WTC11 (cell line): ENCODE measurements at regions of chr1 and their contacts with region 1.

Region 1: DNA sequence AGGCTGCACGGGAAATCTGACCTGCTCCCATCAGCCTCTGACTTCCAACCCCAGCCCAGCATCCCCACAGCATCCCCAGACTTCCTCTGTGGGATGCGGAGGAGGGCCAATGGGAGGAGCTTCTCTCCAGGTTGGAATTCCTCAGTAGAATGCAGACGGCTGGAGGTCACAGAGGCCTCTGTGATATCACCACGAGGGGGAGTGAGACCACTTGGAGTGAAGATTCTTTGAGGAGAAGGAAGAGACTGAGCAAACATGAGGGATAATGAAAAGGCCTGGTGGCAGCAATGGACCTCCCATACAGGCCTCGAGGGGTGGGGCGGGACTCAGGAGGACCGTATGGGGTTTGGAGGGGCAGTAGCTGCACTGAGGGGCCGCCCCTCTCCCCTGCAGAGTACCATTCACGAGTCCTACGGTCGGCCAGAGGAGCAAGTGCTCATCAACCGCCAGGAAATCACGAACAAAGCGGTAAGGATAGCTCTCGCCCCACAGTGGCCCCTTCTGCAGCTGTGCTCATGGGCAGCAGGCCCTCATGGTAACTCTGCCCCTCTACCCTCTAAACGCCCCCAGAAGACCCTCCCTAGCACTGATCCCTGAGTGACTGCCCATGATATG is at the start of gene CATSPER4:
- DNase-seq: peak; percentile 79
- ATAC-seq: peak; percentile 97
- H3K4me3 Mint-ChIP-seq: no peak within 1 kb of the TSS
- H3K27ac Mint-ChIP-seq: peak within 1 kb of the TSS; percentile 55; the same call in 1 of the 2 replicates
- H3K4me1 Mint-ChIP-seq: peaks cover 17% of the 10 kb centered on the region
- H3K27me3 Mint-ChIP-seq: no peaks in the 10 kb centered on the region; the same call in 1 of the 2 replicates
- CTCF ChIP-seq: 0 out of 2 replicates have a peak, but pooled peaks have one; percentile 20
- total RNA-seq, gene CATSPER4: 0.35 to 0.85 TPM (median 0.55 TPM) in 3 replicates

Region 2: GRCh38 chr1:26169669-26170471 is 20.6 kb before region 1 on chr1 and contains the start of gene ZNF593:
- CTCF ChIA-PET with region 1: interaction called, 46 read pairs
- POLR2A ChIA-PET with region 1: interaction called, 4 read pairs
- DNase-seq: peak; percentile 92
- ATAC-seq: peak; percentile 76
- H3K4me3 Mint-ChIP-seq: peak within 1 kb of the TSS; percentile 85
- H3K27ac Mint-ChIP-seq: peak within 1 kb of the TSS; percentile 65; the same call in 1 of the 2 replicates
- H3K4me1 Mint-ChIP-seq: peaks cover 31% of the 10 kb centered on the region
- H3K27me3 Mint-ChIP-seq: peaks cover 14% of the 10 kb centered on the region
- CTCF ChIP-seq: peak; percentile 81
- total RNA-seq, gene ZNF593: 39.6 to 49.1 TPM (median 43.3 TPM) in 3 replicates

Region 3: DNA sequence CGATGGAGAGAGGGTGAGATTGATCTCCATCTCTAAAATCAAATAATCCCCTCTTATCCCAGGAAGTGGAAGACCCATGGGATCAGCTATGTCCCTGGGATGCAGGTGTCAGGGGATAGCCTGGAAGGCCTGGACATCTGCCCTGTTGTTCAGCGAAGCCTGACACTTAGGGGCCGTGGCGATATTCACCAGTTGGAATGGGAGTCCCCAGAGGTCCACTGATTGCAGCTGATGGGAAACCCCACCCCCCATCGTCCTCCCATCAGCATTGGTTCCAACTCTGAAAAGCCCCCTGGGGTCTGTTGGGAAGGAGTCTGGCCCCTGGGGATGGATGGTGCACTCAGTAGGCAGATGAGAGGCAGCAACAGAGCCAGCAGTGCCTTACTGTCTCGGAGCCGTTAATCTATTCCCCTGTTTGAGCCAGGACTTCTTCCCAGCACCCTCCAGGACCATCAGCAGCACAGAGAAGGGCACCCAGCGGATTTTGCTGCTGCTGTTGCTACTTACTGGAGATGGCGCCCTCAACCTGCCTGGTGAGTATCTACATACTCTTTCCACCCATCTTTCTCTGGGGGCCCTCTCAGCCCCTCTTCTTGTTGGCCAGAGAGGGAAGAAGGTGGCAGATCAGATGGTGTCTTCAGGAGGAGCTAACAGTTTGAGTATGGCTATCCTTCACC is 13.3 kb after region 1 on chr1:
- CTCF ChIA-PET with region 1: interaction called, 17 read pairs
- POLR2A ChIA-PET with region 1: interaction called, 4 read pairs
- DNase-seq: no peak
- ATAC-seq: peak; percentile 21
- H3K4me3 Mint-ChIP-seq: no peak overlapping the region
- H3K27ac Mint-ChIP-seq: no peak overlapping the region
- H3K4me1 Mint-ChIP-seq: peaks cover 18% of the 10 kb centered on the region
- H3K27me3 Mint-ChIP-seq: no peaks in the 10 kb centered on the region; the same call in none of the 2 replicates
- CTCF ChIP-seq: no peak

Region 4: GRCh38 chr1:26233903-26234643 is 43.6 kb after region 1 on chr1 and contains the start of gene CEP85:
- CTCF ChIA-PET with region 1: interaction called, 165 read pairs
- POLR2A ChIA-PET with region 1: interaction called, 9 read pairs
- DNase-seq: peak; percentile 99
- ATAC-seq: peak; percentile 96
- H3K4me3 Mint-ChIP-seq: peak within 1 kb of the TSS; percentile 99
- H3K27ac Mint-ChIP-seq: peak within 1 kb of the TSS; percentile 87
- H3K4me1 Mint-ChIP-seq: peaks cover 25% of the 10 kb centered on the region
- H3K27me3 Mint-ChIP-seq: peaks cover 4% of the 10 kb centered on the region
- CTCF ChIP-seq: peak; percentile 49; the same call in 1 of the 2 replicates
- total RNA-seq, gene CEP85: 32.0 to 40.8 TPM (median 35.3 TPM) in 3 replicates

Region 5: DNA sequence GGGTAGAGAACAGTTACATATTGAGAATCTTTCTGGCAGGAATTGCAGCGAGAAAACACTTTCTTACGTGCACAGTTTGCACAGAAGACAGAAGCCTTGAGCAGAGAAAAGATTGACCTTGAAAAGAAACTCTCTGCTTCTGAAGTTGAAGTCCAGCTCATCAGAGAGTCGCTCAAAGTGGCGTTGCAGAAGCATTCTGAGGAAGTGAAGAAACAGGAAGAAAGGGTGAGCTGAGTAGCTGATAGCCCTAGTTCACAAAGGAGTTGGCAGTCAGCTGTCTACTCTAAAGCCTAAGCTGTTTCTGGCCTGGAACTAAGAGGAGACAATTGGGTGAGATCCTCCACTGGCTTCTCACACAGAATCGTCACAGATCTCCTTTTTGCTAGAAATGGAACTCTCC is 69.1 kb after region 1 on chr1:
- CTCF ChIA-PET with region 1: no interaction called
- POLR2A ChIA-PET with region 1: no interaction called
- DNase-seq: no peak
- ATAC-seq: no peak
- H3K4me3 Mint-ChIP-seq: no peak overlapping the region
- H3K27ac Mint-ChIP-seq: no peak overlapping the region
- H3K4me1 Mint-ChIP-seq: no peaks in the 10 kb centered on the region
- H3K27me3 Mint-ChIP-seq: no peaks in the 10 kb centered on the region
- CTCF ChIP-seq: no peak

Region 6: GRCh38 chr1:26321315-26322041 is 131.0 kb after region 1 on chr1:
- CTCF ChIA-PET with region 1: interaction called, 10 read pairs
- POLR2A ChIA-PET with region 1: no interaction called
- DNase-seq: peak; percentile 98
- ATAC-seq: peak; percentile 83
- H3K4me3 Mint-ChIP-seq: no peak overlapping the region
- H3K27ac Mint-ChIP-seq: peak overlapping the region; percentile 93
- H3K4me1 Mint-ChIP-seq: peaks cover 20% of the 10 kb centered on the region
- H3K27me3 Mint-ChIP-seq: no peaks in the 10 kb centered on the region
- CTCF ChIP-seq: peak; percentile 85